T-cell (primary cell): ENCODE measurements at regions of chr16 and their contacts with region 1.

Region 1: GRCh38 chr16:25014500-25015147 is 545 bp downstream of the ARHGAP17 start:
- DNase-seq: peak in 18 of 35 experiments; percentile 0 to 41 (median 8)
- ATAC-seq: peak; percentile 25 to 59 (median 54)
- H3K4me3 ChIP-seq: peak overlapping the region; percentile 62 to 71
- H3K4me3 Mint-ChIP-seq: peak overlapping the region; percentile 96 to 97 (median 97)
- H3K27ac ChIP-seq: peak overlapping the region; percentile 58
- H3K27ac Mint-ChIP-seq: peak overlapping the region; percentile 96 to 97
- H3K4me1 ChIP-seq: peaks cover 31 to 33% of the 10 kb centered on the region in 2 experiments
- H3K4me1 Mint-ChIP-seq: peaks cover 83 to 88% (median 88%) of the 10 kb centered on the region in 3 donors
- H3K27me3 ChIP-seq: no peaks in the 10 kb centered on the region
- H3K27me3 Mint-ChIP-seq: no peaks in the 10 kb centered on the region

Region 2: GRCh38 chr16:24820522-24820921 is 194.1 kb before region 1 on chr16:
- CTCF ChIA-PET with region 1: no interaction called
- POLR2A ChIA-PET with region 1: no interaction called
- DNase-seq: no peak
- ATAC-seq: no peak
- H3K4me3 ChIP-seq: no peak overlapping the region
- H3K4me3 Mint-ChIP-seq: no peak overlapping the region
- H3K27ac ChIP-seq: no peak overlapping the region
- H3K27ac Mint-ChIP-seq: no peak overlapping the region
- H3K4me1 ChIP-seq: no peaks in the 10 kb centered on the region
- H3K4me1 Mint-ChIP-seq: no peaks in the 10 kb centered on the region
- H3K27me3 ChIP-seq: no peaks in the 10 kb centered on the region
- H3K27me3 Mint-ChIP-seq: no peaks in the 10 kb centered on the region

Region 3: DNA sequence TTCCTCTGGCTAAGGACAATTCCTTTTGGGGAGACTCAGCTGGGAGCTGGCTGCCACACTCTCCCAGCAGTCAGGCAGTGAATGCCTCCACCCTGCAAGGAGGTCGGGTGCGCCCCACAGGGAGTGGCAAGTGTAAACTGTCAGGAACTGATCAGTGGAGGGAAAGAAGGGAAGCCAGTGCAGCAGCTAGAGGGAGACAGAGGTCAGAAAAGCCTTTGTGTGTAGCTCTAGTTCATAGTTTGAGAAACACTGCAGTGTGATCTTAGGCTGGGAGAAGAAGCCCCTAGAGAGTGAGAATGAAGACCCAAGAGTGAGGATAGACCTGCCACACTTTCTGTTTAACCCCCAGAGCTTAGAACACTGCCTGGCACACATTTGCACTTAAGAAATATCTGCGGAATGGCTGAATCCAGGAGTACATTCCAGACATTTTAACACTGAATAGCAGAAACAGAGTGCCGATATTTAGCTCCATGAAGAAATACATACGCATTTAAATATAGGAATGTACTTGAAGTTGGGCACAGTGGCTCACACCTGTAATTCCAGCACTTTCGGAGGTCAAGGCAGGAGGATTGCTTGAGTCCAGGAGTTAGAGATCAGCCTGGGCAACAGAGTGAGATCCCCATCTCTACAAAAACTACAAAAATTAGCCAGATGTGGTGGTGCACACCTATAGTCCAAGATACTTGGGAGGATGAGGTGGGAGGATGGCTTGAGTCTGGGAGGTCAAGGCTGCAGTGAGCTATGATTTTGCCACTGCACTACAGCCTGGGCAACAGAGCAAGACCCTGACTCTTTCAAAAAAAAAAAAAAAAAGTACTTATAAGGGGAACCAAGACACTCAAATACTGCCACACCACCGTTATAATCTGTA is 179.9 kb before region 1 on chr16:
- CTCF ChIA-PET with region 1: no interaction called
- POLR2A ChIA-PET with region 1: no interaction called
- DNase-seq: no peak
- ATAC-seq: no peak
- H3K4me3 ChIP-seq: no peak overlapping the region
- H3K4me3 Mint-ChIP-seq: no peak overlapping the region
- H3K27ac ChIP-seq: no peak overlapping the region
- H3K27ac Mint-ChIP-seq: no peak overlapping the region
- H3K4me1 ChIP-seq: no peaks in the 10 kb centered on the region
- H3K4me1 Mint-ChIP-seq: no peaks in the 10 kb centered on the region
- H3K27me3 ChIP-seq: no peaks in the 10 kb centered on the region
- H3K27me3 Mint-ChIP-seq: no peaks in the 10 kb centered on the region

Region 4: GRCh38 chr16:24948516-24948915 is 66.1 kb before region 1 on chr16:
- CTCF ChIA-PET with region 1: interaction called in 1 of 2 experiments, 12 read pairs
- POLR2A ChIA-PET with region 1: no interaction called
- DNase-seq: no peak
- ATAC-seq: no peak
- H3K4me3 ChIP-seq: no peak overlapping the region
- H3K4me3 Mint-ChIP-seq: no peak overlapping the region
- H3K27ac ChIP-seq: no peak overlapping the region
- H3K27ac Mint-ChIP-seq: no peak overlapping the region
- H3K4me1 ChIP-seq: no peaks in the 10 kb centered on the region
- H3K4me1 Mint-ChIP-seq: no peaks in the 10 kb centered on the region
- H3K27me3 ChIP-seq: no peaks in the 10 kb centered on the region
- H3K27me3 Mint-ChIP-seq: no peaks in the 10 kb centered on the region

Region 5: GRCh38 chr16:25031441-25032307 is 17.1 kb after region 1 on chr16:
- CTCF ChIA-PET with region 1: interaction called in 1 of 2 experiments, 16 read pairs
- POLR2A ChIA-PET with region 1: interaction called in 1 of 2 experiments, 4 read pairs
- DNase-seq: peak; percentile 74 to 96 (median 90)
- ATAC-seq: peak; percentile 99 to 100 (median 100)
- H3K4me3 ChIP-seq: peak overlapping the region; percentile 67 to 82
- H3K4me3 Mint-ChIP-seq: peak overlapping the region; percentile 83 to 96 (median 90)
- H3K27ac ChIP-seq: peak overlapping the region; percentile 56
- H3K27ac Mint-ChIP-seq: peak overlapping the region; percentile 90 to 95
- H3K4me1 ChIP-seq: peaks cover 17 to 30% of the 10 kb centered on the region in 2 experiments
- H3K4me1 Mint-ChIP-seq: peaks cover 36 to 43% (median 43%) of the 10 kb centered on the region in 3 donors
- H3K27me3 ChIP-seq: no peaks in the 10 kb centered on the region
- H3K27me3 Mint-ChIP-seq: no peaks in the 10 kb centered on the region

Region 6: GRCh38 chr16:25051406-25052150 is 37.0 kb after region 1 on chr16:
- CTCF ChIA-PET with region 1: interaction called in 1 of 2 experiments, 4 read pairs
- POLR2A ChIA-PET with region 1: interaction called, 5 to 15 read pairs
- DNase-seq: no peak
- ATAC-seq: no peak
- H3K4me3 ChIP-seq: no peak overlapping the region
- H3K4me3 Mint-ChIP-seq: peak overlapping the region; percentile 51 to 91 (median 72)
- H3K27ac ChIP-seq: peak overlapping the region; percentile 88
- H3K27ac Mint-ChIP-seq: peak overlapping the region; percentile 90 to 98
- H3K4me1 ChIP-seq: peaks cover 22 to 46% of the 10 kb centered on the region in 2 experiments
- H3K4me1 Mint-ChIP-seq: peaks cover 51 to 54% (median 53%) of the 10 kb centered on the region in 3 donors
- H3K27me3 ChIP-seq: no peaks in the 10 kb centered on the region
- H3K27me3 Mint-ChIP-seq: no peaks in the 10 kb centered on the region